ENCODE measurements at regions of chr4 and their contacts with region 1.

Region 1: DNA sequence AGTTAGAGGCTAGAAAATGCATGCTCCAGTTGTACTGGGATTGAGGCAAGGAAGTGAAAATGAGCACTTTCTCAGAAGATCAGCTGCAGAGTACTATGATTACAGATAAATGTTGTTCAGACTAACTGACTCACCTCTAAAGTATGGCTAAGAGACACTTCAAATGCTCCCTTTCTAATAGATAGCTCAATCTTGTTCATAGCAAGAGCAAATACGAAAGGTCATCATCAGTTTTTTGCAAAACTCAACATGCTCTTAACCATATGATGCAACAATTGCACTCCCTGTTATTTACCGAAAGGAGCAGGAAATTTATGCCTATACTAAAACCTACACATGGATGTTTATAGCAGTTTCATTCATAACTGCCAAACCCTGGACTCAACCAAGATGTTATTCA is 838.4 kb upstream of the INTU start:
- DNase-seq: no peak
- H3K4me3 ChIP-seq: no peak overlapping the region
- H3K27me3 ChIP-seq: no peaks in the 10 kb centered on the region
- CTCF ChIP-seq: no peak

Region 2: DNA sequence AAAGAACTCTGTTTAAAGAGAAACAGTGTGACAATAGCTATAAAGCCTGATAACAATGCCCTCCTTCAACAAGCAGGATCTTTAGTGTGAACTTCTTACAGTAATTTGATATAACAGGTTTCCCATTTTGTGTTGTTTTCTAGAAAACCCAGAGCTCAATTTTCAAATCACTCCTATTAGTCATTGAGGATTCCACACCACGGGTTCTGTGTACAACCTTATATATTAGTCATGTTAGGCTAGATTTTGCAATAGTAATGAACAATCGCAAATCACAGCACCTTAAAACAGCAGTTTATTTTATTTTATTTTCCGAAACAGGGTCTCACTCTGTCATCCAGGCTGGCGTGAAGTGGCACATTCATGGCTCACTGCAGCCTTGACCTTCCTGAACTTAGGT is 182.5 kb before region 1 on chr4:
- CTCF ChIA-PET with region 1: no interaction called
- POLR2A ChIA-PET with region 1: interaction called, 11 read pairs
- DNase-seq: no peak
- H3K4me3 ChIP-seq: no peak overlapping the region
- H3K27me3 ChIP-seq: no peaks in the 10 kb centered on the region
- CTCF ChIP-seq: no peak